AG04450 (cell line): ENCODE measurements at regions of chr5 and their contacts with region 1.

Region 1: GRCh38 chr5:170070556-170071412 is 34.9 kb upstream of the FOXI1 start:
- DNase-seq: peak; percentile 3
- H3K4me3 ChIP-seq: no peak overlapping the region
- H3K27ac ChIP-seq: no peak overlapping the region
- H3K27me3 ChIP-seq: no peaks in the 10 kb centered on the region
- CTCF ChIP-seq: peak; percentile 75

Region 2: GRCh38 chr5:169695919-169696490 is 374.8 kb before region 1 on chr5:
- CTCF ChIA-PET with region 1: interaction called, 67 read pairs
- POLR2A ChIA-PET with region 1: no interaction called
- DNase-seq: peak; percentile 87
- H3K4me3 ChIP-seq: peak overlapping the region; percentile 11; the same call in 1 of the 2 replicates
- H3K27ac ChIP-seq: peak overlapping the region; percentile 81
- H3K27me3 ChIP-seq: no peaks in the 10 kb centered on the region
- CTCF ChIP-seq: no peak

Region 3: GRCh38 chr5:169701910-169702451 is 368.8 kb before region 1 on chr5:
- CTCF ChIA-PET with region 1: interaction called, 67 read pairs
- POLR2A ChIA-PET with region 1: no interaction called
- DNase-seq: no peak
- H3K4me3 ChIP-seq: no peak overlapping the region
- H3K27ac ChIP-seq: no peak overlapping the region
- H3K27me3 ChIP-seq: no peaks in the 10 kb centered on the region
- CTCF ChIP-seq: peak; percentile 67

Region 4: GRCh38 chr5:169706758-169707691 is 363.8 kb before region 1 on chr5:
- CTCF ChIA-PET with region 1: interaction called, 67 read pairs
- POLR2A ChIA-PET with region 1: no interaction called
- DNase-seq: peak; percentile 37
- H3K4me3 ChIP-seq: no peak overlapping the region
- H3K27ac ChIP-seq: peak overlapping the region; percentile 67
- H3K27me3 ChIP-seq: no peaks in the 10 kb centered on the region
- CTCF ChIP-seq: no peak

Region 5: DNA sequence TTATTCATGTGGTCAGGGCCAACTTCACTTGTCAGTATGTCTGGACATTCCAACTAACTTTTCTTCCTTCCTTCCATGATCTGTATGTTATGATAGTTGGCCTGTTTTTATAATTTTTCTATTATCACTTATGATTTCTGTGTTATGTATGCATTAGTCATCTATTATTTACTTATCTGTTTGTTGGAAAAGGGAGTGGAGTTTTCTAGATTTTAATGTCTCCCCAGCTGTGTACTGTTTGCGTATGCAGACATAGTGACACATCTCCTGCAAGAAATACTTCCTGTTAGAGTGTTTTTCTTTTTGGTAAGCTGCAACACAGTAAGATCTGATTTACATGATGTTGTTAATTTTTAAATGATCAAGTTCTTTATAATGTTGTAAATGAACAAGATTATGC is 81.8 kb before region 1 on chr5:
- CTCF ChIA-PET with region 1: interaction called, 10 read pairs
- POLR2A ChIA-PET with region 1: no interaction called
- DNase-seq: no peak
- H3K4me3 ChIP-seq: no peak overlapping the region
- H3K27ac ChIP-seq: no peak overlapping the region
- H3K27me3 ChIP-seq: no peaks in the 10 kb centered on the region
- CTCF ChIP-seq: no peak

Region 6: DNA sequence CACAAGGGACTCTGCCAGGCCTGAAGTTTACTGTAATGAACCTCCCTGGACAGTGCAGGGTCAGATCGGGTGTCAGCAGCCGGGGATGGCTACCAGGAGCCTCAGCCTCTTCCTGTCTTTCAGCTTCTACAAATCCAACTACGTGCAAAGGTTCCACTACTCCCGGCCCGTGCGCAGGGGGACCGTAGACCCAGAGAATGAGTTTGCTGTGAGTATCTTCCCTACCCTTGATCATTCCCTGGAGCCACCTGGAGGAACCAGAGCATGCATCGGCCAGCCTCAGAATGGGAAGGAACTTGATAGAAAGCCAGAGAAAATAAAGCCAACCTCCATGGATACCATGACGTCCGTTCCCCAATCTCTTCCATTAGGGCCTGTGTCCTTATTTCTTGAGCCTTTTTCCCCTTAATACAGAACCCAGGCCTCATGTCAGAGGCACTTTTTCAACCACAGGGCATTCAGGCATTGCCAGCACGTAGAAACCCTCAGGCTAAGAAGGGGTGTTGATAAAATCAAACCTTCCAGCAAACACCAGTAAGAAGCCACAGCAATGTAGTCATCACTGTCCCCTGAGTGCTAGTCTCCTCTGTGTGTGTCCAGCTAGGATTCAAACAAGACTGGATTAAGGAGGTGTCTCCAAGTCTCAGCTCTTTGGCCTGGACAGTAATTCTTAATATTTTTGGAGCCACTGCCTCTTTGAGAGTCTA is 14.1 kb before region 1 on chr5:
- CTCF ChIA-PET with region 1: interaction called, 40 read pairs
- POLR2A ChIA-PET with region 1: no interaction called
- DNase-seq: no peak
- H3K4me3 ChIP-seq: no peak overlapping the region
- H3K27ac ChIP-seq: no peak overlapping the region
- H3K27me3 ChIP-seq: peaks cover 3% of the 10 kb centered on the region
- CTCF ChIP-seq: no peak

Region 7: DNA sequence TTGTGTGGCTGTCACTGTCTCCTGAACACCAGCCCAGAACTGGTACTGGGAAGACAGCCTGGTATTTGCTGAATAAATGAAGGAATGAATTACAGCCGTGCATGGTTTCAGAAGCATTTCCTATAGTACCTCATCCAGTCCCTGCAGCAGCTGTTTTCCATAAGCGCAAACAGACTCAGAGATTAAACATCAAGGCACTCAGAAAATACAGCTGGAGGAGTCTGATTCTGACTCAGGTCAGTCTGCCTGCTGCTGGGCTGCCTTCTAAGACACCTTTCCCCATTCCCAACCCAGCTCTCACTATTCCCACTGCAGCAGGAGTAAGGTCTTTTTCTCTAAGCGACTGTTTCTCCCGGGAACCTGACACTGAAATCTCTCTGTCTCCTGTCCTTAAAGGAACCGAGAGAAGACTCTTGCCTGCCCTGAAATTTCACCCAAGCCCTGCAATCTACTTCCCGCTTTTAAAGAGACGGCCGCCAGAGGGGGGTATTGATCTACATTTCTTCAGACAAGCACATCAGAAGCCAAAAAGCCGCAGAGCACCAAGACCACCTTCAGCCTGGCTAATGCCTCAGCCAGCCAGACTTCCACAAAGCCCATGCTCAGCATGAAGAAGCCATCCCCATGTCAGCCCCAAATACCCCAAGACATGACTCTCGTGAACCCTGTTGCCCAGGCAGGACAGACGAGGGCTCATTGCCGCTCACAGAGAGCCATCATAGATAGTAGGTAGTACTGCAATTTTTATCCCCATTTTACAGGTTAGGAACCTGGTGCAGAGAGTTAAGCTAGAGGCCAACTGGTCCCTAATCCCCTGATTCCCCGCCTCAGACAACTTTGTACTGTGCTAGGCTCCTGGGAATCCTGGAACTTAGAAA is 29.5 kb after region 1 on chr5:
- CTCF ChIA-PET with region 1: interaction called, 13 read pairs
- POLR2A ChIA-PET with region 1: no interaction called
- DNase-seq: peak; percentile 61
- H3K4me3 ChIP-seq: no peak overlapping the region
- H3K27ac ChIP-seq: no peak overlapping the region
- H3K27me3 ChIP-seq: no peaks in the 10 kb centered on the region
- CTCF ChIP-seq: peak; percentile 70